WTC11 (cell line): ENCODE measurements at regions of chr15 and their contacts with region 1.

Region 1: GRCh38 chr15:28021281-28022039 is 77.7 kb downstream of the OCA2 start:
- DNase-seq: peak; percentile 73
- ATAC-seq: peak; percentile 75
- H3K4me3 Mint-ChIP-seq: no peak overlapping the region
- H3K27ac Mint-ChIP-seq: no peak overlapping the region
- H3K4me1 Mint-ChIP-seq: peaks cover 25% of the 10 kb centered on the region
- H3K27me3 Mint-ChIP-seq: peaks cover 5% of the 10 kb centered on the region
- CTCF ChIP-seq: peak; percentile 39; the same call in 1 of the 2 replicates

Region 2: GRCh38 chr15:27679731-27680471 is 341.6 kb before region 1 on chr15:
- CTCF ChIA-PET with region 1: interaction called, 38 read pairs
- POLR2A ChIA-PET with region 1: no interaction called
- DNase-seq: no peak
- ATAC-seq: peak; percentile 40
- H3K4me3 Mint-ChIP-seq: no peak overlapping the region; the same call in 1 of the 2 replicates
- H3K27ac Mint-ChIP-seq: peak overlapping the region; percentile 2; the same call in 1 of the 2 replicates
- H3K4me1 Mint-ChIP-seq: peaks cover 27% of the 10 kb centered on the region
- H3K27me3 Mint-ChIP-seq: peaks cover 8% of the 10 kb centered on the region
- CTCF ChIP-seq: no peak

Region 3: GRCh38 chr15:27714675-27715074 is 306.8 kb before region 1 on chr15:
- CTCF ChIA-PET with region 1: interaction called, 15 read pairs
- POLR2A ChIA-PET with region 1: no interaction called
- DNase-seq: peak; percentile 65
- ATAC-seq: peak; percentile 77
- H3K4me3 Mint-ChIP-seq: no peak overlapping the region
- H3K27ac Mint-ChIP-seq: no peak overlapping the region
- H3K4me1 Mint-ChIP-seq: peaks cover 5% of the 10 kb centered on the region
- H3K27me3 Mint-ChIP-seq: no peaks in the 10 kb centered on the region; the same call in 1 of the 2 replicates
- CTCF ChIP-seq: 0 out of 2 replicates have a peak, but pooled peaks have one; percentile 23

Region 4: GRCh38 chr15:27889258-27889657 is 132.2 kb before region 1 on chr15:
- CTCF ChIA-PET with region 1: no interaction called
- POLR2A ChIA-PET with region 1: no interaction called
- DNase-seq: no peak
- ATAC-seq: no peak
- H3K4me3 Mint-ChIP-seq: no peak overlapping the region
- H3K27ac Mint-ChIP-seq: no peak overlapping the region
- H3K4me1 Mint-ChIP-seq: no peaks in the 10 kb centered on the region
- H3K27me3 Mint-ChIP-seq: peaks cover 9% of the 10 kb centered on the region; the same call in 1 of the 2 replicates
- CTCF ChIP-seq: no peak

Region 5: GRCh38 chr15:27928386-27928785 is 93.1 kb before region 1 on chr15:
- CTCF ChIA-PET with region 1: no interaction called
- POLR2A ChIA-PET with region 1: no interaction called
- DNase-seq: no peak
- ATAC-seq: no peak
- H3K4me3 Mint-ChIP-seq: no peak overlapping the region
- H3K27ac Mint-ChIP-seq: no peak overlapping the region
- H3K4me1 Mint-ChIP-seq: no peaks in the 10 kb centered on the region
- H3K27me3 Mint-ChIP-seq: peaks cover 4% of the 10 kb centered on the region
- CTCF ChIP-seq: no peak

Region 6: DNA sequence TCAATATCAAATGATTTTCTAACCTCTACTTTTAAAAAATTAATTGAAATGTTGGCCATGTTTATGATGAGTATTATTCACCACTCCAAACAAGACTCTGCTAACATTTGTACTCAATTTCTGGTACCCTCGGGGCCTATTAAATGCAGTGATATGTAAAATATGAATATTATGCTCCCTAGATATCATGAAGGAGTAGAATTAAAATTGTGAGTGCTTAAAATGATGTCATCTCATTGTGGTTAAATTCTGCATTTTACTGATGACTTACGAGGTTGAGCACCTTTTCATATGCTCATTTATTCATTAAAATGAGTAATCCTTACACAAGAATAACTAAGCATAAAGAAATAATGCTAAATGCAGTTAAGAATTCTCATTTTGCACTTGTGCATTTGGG is 82.2 kb before region 1 on chr15:
- CTCF ChIA-PET with region 1: interaction called, 10 read pairs
- POLR2A ChIA-PET with region 1: no interaction called
- DNase-seq: no peak
- ATAC-seq: no peak
- H3K4me3 Mint-ChIP-seq: no peak overlapping the region
- H3K27ac Mint-ChIP-seq: no peak overlapping the region
- H3K4me1 Mint-ChIP-seq: peaks cover 28% of the 10 kb centered on the region
- H3K27me3 Mint-ChIP-seq: no peaks in the 10 kb centered on the region
- CTCF ChIP-seq: no peak

Region 7: DNA sequence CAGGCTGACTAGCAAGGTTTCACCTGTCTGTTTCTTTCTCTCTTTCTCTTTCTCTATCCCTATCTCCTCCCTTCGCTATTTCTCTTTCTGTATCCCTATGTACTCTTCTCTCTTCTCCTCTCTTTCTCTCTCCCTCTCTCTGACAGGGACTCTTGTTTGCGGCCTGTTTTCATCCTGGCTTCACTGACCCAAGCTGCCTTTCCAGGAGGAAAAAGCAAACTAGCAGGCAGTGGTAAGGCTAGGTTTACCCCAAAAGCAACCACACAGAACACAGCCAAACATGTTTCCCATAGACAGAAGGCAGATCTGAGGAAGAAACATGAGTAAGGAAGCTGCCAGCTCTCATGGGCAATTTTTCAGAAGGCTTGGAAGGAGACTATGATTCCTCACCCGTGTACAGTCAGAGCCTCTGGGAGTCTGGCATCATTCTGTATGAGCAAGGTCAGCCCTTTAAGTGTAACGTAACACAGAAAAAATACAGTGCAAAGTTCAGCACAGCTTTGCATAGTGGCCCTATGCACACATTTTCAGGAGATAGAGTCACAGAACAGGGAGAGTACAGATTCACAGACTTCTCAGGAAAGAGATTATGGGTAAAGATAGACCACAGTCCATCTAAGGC is 16.6 kb after region 1 on chr15:
- CTCF ChIA-PET with region 1: interaction called, 24 read pairs
- POLR2A ChIA-PET with region 1: no interaction called
- DNase-seq: no peak
- ATAC-seq: no peak
- H3K4me3 Mint-ChIP-seq: no peak overlapping the region
- H3K27ac Mint-ChIP-seq: no peak overlapping the region
- H3K4me1 Mint-ChIP-seq: no peaks in the 10 kb centered on the region
- H3K27me3 Mint-ChIP-seq: no peaks in the 10 kb centered on the region
- CTCF ChIP-seq: no peak

Region 8: GRCh38 chr15:28098766-28099554 is 77.5 kb after region 1 on chr15 and contains the start of gene OCA2:
- CTCF ChIA-PET with region 1: interaction called, 20 read pairs
- POLR2A ChIA-PET with region 1: no interaction called
- DNase-seq: peak; percentile 92
- ATAC-seq: peak; percentile 37
- H3K4me3 Mint-ChIP-seq: peak within 1 kb of the TSS; percentile 73
- H3K27ac Mint-ChIP-seq: no peak within 1 kb of the TSS
- H3K4me1 Mint-ChIP-seq: peaks cover 23% of the 10 kb centered on the region
- H3K27me3 Mint-ChIP-seq: peaks cover 91% of the 10 kb centered on the region
- CTCF ChIP-seq: no peak
- total RNA-seq, gene OCA2: 0.27 to 0.39 TPM (median 0.27 TPM) in 3 replicates

Region 9: DNA sequence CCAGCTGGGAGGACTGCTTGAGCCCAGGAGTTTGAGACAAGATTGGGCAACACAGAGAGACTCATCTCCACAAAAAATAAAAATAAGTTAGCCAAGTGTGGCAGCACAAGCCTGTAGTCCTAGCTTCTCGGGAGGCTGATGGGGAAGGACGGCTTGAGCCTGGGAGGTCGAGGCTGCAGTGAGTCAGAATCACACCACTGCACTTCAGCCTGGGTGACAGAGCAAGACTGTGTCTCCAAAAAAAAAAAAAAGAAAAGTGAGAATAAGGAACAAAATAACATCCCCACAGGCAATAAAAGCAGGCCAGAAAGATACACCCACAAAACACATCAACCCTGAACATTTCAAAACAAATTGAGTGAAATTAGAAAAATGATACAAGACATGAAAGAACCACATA is 126.3 kb after region 1 on chr15:
- CTCF ChIA-PET with region 1: no interaction called
- POLR2A ChIA-PET with region 1: no interaction called
- DNase-seq: no peak
- ATAC-seq: no peak
- H3K4me3 Mint-ChIP-seq: no peak overlapping the region
- H3K27ac Mint-ChIP-seq: peak overlapping the region; percentile 47
- H3K4me1 Mint-ChIP-seq: no peaks in the 10 kb centered on the region
- H3K27me3 Mint-ChIP-seq: no peaks in the 10 kb centered on the region
- CTCF ChIP-seq: no peak